Activated CD8-positive, alpha-beta T cell treated with anti-CD3 and anti-CD28 coated beads for 36 hours (primary cell): ENCODE measurements at regions of chr3 and their contacts with region 1.

Region 1: GRCh38 chr3:100719136-100719535 is 9.8 kb downstream of the TFG start:
- DNase-seq: no peak
- ATAC-seq: no peak
- H3K4me3 Mint-ChIP-seq: no peak overlapping the region
- H3K27ac Mint-ChIP-seq: no peak overlapping the region
- H3K4me1 Mint-ChIP-seq: peaks cover 36% of the 10 kb centered on the region
- H3K27me3 Mint-ChIP-seq: no peaks in the 10 kb centered on the region
- CTCF ChIP-seq: no peak

Region 2: GRCh38 chr3:100629421-100630127 is 89.6 kb before region 1 on chr3:
- CTCF ChIA-PET with region 1: interaction called, 8 read pairs
- POLR2A ChIA-PET with region 1: no interaction called
- intact Hi-C with region 1: loop called (anchors 5 kb)
- DNase-seq: peak; percentile 15
- ATAC-seq: peak; percentile 51
- H3K4me3 Mint-ChIP-seq: no peak overlapping the region
- H3K27ac Mint-ChIP-seq: no peak overlapping the region
- H3K4me1 Mint-ChIP-seq: peaks cover 32% of the 10 kb centered on the region
- H3K27me3 Mint-ChIP-seq: peaks cover 1% of the 10 kb centered on the region
- CTCF ChIP-seq: no peak

Region 3: GRCh38 chr3:100650651-100651611 is 68.2 kb before region 1 on chr3:
- CTCF ChIA-PET with region 1: interaction called, 6 read pairs
- POLR2A ChIA-PET with region 1: interaction called, 5 read pairs
- intact Hi-C with region 1: loop called (anchors 5 kb)
- DNase-seq: peak; percentile 60
- ATAC-seq: peak; percentile 99
- H3K4me3 Mint-ChIP-seq: peak overlapping the region; percentile 39
- H3K27ac Mint-ChIP-seq: peak overlapping the region; percentile 89
- H3K4me1 Mint-ChIP-seq: peaks cover 20% of the 10 kb centered on the region
- H3K27me3 Mint-ChIP-seq: no peaks in the 10 kb centered on the region
- CTCF ChIP-seq: peak; percentile 69